ENCODE measurements at regions of chr21 and their contacts with region 1.

Region 1: GRCh38 chr21:35932232-35932911 is 128.0 kb downstream of the SETD4 start:
- DNase-seq: peak; percentile 93
- H3K4me3 Mint-ChIP-seq: no peak overlapping the region
- H3K27ac Mint-ChIP-seq: no peak overlapping the region
- H3K4me1 Mint-ChIP-seq: no peaks in the 10 kb centered on the region
- H3K27me3 Mint-ChIP-seq: no peaks in the 10 kb centered on the region
- CTCF ChIP-seq: no peak

Region 2: DNA sequence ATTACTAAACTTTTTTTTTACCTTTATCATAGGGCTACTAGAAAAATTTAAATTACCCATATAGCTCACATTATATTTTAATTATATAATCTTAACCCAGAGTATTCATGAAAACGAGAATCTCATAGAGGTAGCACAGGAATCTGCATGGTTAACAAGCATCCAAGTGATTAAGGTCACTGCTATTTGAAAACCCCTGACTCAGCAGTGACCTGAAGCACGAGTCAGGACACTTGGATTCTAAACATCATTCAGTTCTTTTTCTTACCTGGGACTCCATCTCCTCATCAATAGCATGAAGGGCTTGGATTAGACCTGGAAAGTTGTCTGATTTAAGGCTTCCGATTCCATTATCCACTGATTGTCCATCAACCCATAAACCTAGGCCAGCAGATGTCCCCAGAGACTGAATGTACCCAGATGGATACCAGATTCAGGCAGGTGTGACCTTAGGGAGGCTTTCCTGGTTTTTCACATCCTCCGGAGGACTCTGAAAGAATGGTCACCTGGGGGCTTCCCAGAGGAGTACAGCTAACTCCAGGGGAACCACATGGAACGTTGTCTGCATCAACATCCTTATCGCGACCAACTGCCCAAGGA is 46.3 kb before region 1 on chr21:
- CTCF ChIA-PET with region 1: no interaction called
- POLR2A ChIA-PET with region 1: no interaction called
- intact Hi-C with region 1: loop called (anchors 5 kb)
- DNase-seq: peak; percentile 4
- H3K4me3 Mint-ChIP-seq: no peak overlapping the region
- H3K27ac Mint-ChIP-seq: no peak overlapping the region
- H3K4me1 Mint-ChIP-seq: no peaks in the 10 kb centered on the region
- H3K27me3 Mint-ChIP-seq: peaks cover 39% of the 10 kb centered on the region
- CTCF ChIP-seq: no peak

Region 3: DNA sequence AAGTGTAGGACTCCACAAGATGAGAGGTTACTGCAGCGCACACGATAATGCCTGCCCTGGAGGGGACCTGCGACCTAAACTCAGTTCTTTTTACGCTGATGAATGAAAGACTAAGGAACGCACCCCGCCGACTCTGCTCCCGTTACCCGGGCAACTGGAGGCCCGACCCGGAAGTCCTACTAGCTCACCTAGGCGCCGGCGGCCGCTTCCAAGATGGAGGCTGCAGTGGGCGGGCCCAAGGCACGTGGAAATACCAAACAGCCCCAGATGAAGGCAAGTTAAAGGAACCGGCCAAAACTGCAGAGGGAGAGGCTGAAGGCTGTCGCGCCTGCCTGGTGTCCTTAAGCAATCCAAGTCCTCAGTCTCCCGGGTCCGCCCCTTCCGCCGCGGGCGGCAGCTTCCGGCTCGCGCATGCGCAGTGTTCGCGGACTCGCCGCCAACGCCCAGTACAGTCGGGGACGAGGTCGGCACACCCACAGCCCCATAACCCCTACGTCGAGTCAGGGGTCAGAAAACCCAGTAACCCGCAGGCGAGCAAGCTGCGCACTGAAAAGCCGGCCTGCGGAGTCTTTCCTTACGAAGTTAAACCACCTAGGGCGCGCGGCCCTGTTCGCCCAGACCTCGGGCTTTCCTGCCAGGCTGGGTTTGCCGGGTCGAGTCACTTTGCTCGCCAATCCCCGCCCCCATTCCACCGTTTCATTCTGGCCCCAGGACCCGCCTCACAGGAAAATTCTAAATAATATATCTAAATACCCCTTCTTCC is 128.0 kb after region 1 on chr21 and contains the start of gene SETD4:
- CTCF ChIA-PET with region 1: no interaction called
- POLR2A ChIA-PET with region 1: no interaction called
- intact Hi-C with region 1: no loop called
- DNase-seq: peak; percentile 93
- H3K4me3 Mint-ChIP-seq: peak within 1 kb of the TSS; percentile 90
- H3K27ac Mint-ChIP-seq: peak within 1 kb of the TSS; percentile 90
- H3K4me1 Mint-ChIP-seq: peaks cover 6% of the 10 kb centered on the region
- H3K27me3 Mint-ChIP-seq: no peaks in the 10 kb centered on the region
- CTCF ChIP-seq: no peak
- total RNA-seq, gene SETD4: 22.6 and 23.3 TPM in 2 replicates